OCI-LY7 (cell line): ENCODE measurements at regions of chr1 and their contacts with region 1.

Region 1: GRCh38 chr1:45033356-45033755 is 21.3 kb downstream of the UROD start:
- DNase-seq: peak; percentile 82
- H3K4me3 ChIP-seq: no peak overlapping the region
- H3K27ac ChIP-seq: peak overlapping the region; percentile 42
- H3K4me1 ChIP-seq: peaks cover 18% of the 10 kb centered on the region
- CTCF ChIP-seq: no peak

Region 2: DNA sequence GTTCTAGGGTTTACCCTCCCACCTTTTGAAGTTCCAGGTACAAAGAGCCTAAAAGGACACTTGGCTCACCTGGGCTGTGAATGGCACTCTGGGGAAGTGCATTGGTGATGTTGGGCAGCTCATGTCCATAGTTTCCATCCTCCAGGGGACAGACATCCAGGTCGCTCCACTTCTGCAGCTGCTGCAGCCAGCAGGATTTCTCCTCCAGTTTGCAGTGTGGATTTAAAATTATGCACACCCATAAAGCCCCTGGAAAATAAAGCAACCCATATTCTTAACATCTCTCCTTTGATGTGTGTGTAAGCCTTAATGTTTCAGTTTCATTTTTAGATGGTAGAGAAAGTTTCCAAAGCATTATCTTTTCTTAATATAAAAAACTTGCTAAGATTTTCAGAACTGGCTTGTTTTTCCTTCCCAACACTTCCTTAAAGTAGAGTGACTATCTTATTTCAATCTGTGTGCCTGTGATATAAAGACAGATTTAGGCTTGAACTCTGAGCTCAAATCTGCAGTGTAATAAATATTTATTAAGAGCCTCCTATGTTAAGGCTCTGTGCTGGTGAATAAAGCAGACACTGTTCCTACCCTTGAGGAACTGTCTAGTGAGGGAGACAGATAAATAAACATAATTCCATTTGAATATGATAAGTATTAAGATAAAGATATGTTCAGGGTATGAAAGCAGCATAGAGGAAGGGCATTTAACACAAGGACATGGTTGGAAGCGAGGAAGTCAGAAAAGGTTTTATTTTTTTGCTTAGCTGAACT is 17.8 kb after region 1 on chr1:
- CTCF ChIA-PET with region 1: no interaction called
- POLR2A ChIA-PET with region 1: interaction called, 21 read pairs
- intact Hi-C with region 1: no loop called
- DNase-seq: peak; percentile 27
- H3K4me3 ChIP-seq: peak overlapping the region; percentile 40
- H3K27ac ChIP-seq: peak overlapping the region; percentile 38
- H3K4me1 ChIP-seq: peaks cover 34% of the 10 kb centered on the region
- CTCF ChIP-seq: no peak

Region 3: GRCh38 chr1:45084562-45084961 is 51.2 kb after region 1 on chr1:
- CTCF ChIA-PET with region 1: no interaction called
- POLR2A ChIA-PET with region 1: no interaction called
- intact Hi-C with region 1: no loop called
- DNase-seq: no peak
- H3K4me3 ChIP-seq: no peak overlapping the region
- H3K27ac ChIP-seq: no peak overlapping the region
- H3K4me1 ChIP-seq: no peaks in the 10 kb centered on the region
- CTCF ChIP-seq: no peak